ENCODE measurements at regions of chr6 and their contacts with region 1.

Region 1: DNA sequence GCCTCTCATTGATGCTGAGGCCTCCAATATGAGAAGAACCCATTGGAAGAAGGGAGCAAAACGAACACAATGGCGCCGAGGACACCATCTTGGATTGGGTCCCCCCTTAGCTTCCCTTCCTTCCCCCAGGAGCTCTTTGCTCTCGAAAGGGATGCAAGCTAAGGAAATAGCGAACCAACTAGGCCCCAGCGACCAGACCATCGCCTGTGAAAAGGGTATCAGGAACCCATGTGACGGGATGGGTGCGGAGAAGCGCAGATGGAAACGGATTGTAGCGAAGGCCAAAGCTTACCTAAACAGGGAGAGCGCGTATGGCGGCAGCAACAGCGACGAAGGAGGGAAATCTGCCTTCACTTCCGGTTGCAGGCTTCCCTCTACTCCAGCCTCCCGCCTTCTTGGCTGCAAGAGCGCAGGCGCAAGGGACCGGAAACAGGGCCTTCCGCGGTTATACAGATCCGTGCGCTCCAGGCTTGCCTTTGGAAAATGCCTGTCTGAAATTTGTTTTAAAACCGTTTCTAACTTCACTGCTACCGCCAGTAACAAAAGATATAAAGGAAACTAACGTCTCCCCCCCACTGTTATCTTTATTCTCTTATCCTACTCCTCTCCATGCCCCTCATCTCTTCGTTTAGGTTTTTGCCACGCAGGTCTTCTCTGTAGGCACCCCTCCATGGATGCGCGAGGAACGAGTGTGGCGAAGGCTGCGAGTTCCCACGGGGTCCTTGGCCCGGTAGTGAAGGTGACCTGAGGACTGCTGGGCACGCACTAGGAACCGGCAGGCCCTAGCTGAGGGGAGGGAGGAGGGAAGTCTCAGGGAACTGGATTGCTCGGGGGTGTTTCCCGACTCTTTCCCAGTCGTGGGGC is at the start of gene DDX39B:
- DNase-seq: peak; percentile 89 to 90
- H3K4me3 ChIP-seq: peak within 1 kb of the TSS; percentile 75 to 99 (median 97)
- H3K27ac ChIP-seq: peak within 1 kb of the TSS; percentile 99
- H3K4me1 ChIP-seq: peaks cover 4 to 18% (median 10%) of the 10 kb centered on the region in 4 experiments; a peak in 5 of 7 replicates
- H3K27me3 ChIP-seq: no peaks in the 10 kb centered on the region
- CTCF ChIP-seq: no peak
- EP300 ChIP-seq: peak in 1 of 2 experiments; percentile 20; a peak in 1 of 3 replicates
- POLR2A ChIP-seq: peak; percentile 97 to 99
- RAD21 ChIP-seq: no peak
- total RNA-seq, gene DDX39B: 780 and 794 TPM in 2 replicates

Region 2: GRCh38 chr6:31419842-31420241 is 122.0 kb before region 1 on chr6:
- CTCF ChIA-PET with region 1: no interaction called
- POLR2A ChIA-PET with region 1: no interaction called
- DNase-seq: peak in 1 of 2 experiments; percentile 24
- H3K4me3 ChIP-seq: no peak overlapping the region
- H3K27ac ChIP-seq: no peak overlapping the region
- H3K4me1 ChIP-seq: no peaks in the 10 kb centered on the region
- H3K27me3 ChIP-seq: no peaks in the 10 kb centered on the region
- CTCF ChIP-seq: no peak
- EP300 ChIP-seq: no peak
- POLR2A ChIP-seq: no peak
- RAD21 ChIP-seq: no peak

Region 3: DNA sequence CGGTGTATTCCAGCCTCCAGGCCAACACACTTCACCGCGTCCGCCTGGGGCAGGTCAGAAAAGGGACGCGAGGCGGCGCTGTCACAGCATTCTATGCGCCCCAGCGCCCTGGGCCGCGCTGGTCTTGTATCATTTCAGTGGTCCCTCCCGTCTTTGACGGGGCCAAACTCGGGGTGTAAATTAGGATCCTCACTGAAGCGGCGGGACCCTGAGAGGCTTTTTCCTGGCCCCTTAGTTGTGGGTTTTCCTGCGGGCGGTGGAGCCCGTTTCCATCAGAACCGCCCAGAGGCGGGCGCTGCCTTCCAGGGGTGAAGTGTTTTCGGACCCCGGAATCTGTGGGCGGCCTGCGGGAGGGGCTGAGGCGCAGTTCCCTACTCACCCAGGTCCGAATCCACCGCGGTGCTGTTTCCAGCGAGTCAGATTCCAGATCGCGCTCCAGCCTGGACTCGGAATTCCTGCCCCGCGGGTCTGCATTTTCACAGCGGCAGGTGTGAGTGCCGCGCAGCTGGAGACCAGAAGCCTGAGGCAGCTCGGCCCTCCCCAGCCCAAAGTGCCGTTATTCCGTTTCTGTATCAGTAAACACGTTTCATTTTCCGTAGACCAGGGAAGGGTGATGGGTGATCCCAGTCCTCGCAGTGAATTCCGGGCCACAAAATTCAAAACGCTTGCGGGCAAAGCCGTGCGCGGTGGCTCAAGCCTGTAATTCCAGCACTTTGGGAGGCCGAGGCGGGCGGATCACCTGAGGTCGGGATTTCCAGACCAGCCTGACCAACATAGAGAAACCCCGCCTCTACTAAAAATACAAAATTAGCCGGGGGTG is 47.8 kb before region 1 on chr6:
- CTCF ChIA-PET with region 1: interaction called, 3 read pairs
- POLR2A ChIA-PET with region 1: interaction called, 136 read pairs
- DNase-seq: peak in 1 of 2 experiments; percentile 92
- H3K4me3 ChIP-seq: peak overlapping the region; percentile 48 to 70 (median 64)
- H3K27ac ChIP-seq: no peak overlapping the region
- H3K4me1 ChIP-seq: peaks cover 0 to 12% (median 5%) of the 10 kb centered on the region in 4 experiments; a peak in 6 of 7 replicates
- H3K27me3 ChIP-seq: peaks cover 0 to 15% (median 9%) of the 10 kb centered on the region in 4 experiments; a peak in 6 of 7 replicates
- CTCF ChIP-seq: peak; percentile 81 to 89 (median 81)
- EP300 ChIP-seq: 0 out of 3 replicates have a peak, but pooled peaks of 1 of the 2 experiments have one; percentile 14
- POLR2A ChIP-seq: peak in 1 of 2 experiments; percentile 36; a peak in 1 of 3 replicates
- RAD21 ChIP-seq: peak; percentile 65 to 69

Region 4: GRCh38 chr6:31559958-31560696 is 18.2 kb after region 1 on chr6:
- CTCF ChIA-PET with region 1: interaction called, 5 read pairs
- POLR2A ChIA-PET with region 1: interaction called, 12 read pairs
- DNase-seq: no peak
- H3K4me3 ChIP-seq: no peak overlapping the region
- H3K27ac ChIP-seq: no peak overlapping the region
- H3K4me1 ChIP-seq: no peaks in the 10 kb centered on the region
- H3K27me3 ChIP-seq: no peaks in the 10 kb centered on the region
- CTCF ChIP-seq: no peak
- EP300 ChIP-seq: no peak
- POLR2A ChIP-seq: no peak
- RAD21 ChIP-seq: no peak

Region 5: DNA sequence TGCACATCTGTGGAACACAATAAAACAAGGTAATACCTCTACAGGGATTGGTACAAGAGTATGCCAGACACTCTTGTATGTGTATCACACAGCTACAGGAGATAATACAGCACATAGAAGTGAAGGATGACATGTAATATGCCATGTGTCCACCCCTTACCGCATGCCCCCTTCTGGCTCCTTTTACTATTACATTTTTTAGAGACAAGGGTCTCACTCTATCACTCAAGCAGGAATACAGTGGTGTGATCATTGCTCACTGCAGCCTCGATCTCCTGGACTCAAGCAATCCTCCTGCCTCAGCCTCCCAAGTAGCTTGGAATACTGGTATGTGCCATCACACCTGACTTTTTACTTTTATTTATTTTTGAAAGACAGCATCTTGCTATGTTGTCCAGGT is 55.1 kb after region 1 on chr6:
- CTCF ChIA-PET with region 1: interaction called, 613 read pairs
- POLR2A ChIA-PET with region 1: interaction called, 99 read pairs
- DNase-seq: no peak
- H3K4me3 ChIP-seq: no peak overlapping the region
- H3K27ac ChIP-seq: no peak overlapping the region
- H3K4me1 ChIP-seq: no peaks in the 10 kb centered on the region
- H3K27me3 ChIP-seq: no peaks in the 10 kb centered on the region
- CTCF ChIP-seq: peak in 2 of 3 experiments; percentile 48 to 52; a peak in 2 of 4 replicates
- EP300 ChIP-seq: no peak
- POLR2A ChIP-seq: no peak
- RAD21 ChIP-seq: peak; percentile 26 to 40; a peak in 3 of 4 replicates

Region 6: DNA sequence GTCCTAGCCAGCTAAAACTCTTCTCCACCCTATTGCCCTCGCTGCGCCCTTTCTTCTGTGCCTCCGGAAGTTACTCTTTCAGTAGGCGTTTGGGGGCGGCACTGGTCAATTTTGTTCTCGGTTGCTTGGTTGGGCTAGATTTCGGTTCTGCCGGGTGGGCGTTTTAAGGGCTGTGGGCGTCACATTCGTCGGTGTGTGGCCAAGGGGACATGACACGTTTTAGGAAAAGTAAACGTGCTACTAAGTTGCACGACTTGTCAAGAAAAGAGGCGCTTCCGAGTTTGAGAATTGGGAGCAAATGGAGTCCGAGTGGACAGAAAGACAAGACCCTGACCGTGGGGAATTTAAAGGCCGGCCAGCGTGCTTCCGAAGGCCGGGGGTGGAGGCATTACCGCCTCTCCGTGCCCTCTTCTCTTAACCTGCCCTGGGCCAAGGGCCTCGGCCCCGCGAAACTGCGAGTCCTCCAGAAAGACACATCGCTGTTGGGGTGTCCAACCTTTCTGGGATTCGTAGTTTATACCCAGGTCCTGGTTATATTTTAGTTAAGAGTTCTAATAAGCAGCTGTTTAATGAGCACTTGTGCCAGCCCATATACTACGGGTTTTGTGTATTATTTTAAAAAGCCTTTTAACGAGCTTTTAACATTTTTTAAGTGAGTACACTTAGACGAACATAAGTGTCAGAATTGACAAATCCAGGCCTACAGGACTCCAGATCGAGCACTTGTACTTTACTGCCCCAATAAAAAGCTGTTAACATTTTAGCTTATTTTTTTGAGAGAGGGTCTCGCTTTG is 111.2 kb after region 1 on chr6:
- CTCF ChIA-PET with region 1: interaction called, 6 read pairs
- POLR2A ChIA-PET with region 1: interaction called, 57 read pairs
- DNase-seq: peak in 1 of 2 experiments; percentile 76
- H3K4me3 ChIP-seq: peak overlapping the region; percentile 82 to 94 (median 92)
- H3K27ac ChIP-seq: peak overlapping the region; percentile 99
- H3K4me1 ChIP-seq: peaks cover 0 to 5% (median under 1%) of the 10 kb centered on the region in 4 experiments; a peak in 2 of 7 replicates
- H3K27me3 ChIP-seq: no peaks in the 10 kb centered on the region
- CTCF ChIP-seq: peak in 1 of 3 experiments; percentile 18; a peak in 1 of 4 replicates
- EP300 ChIP-seq: no peak
- POLR2A ChIP-seq: peak in 1 of 2 experiments; percentile 79; a peak in 2 of 3 replicates
- RAD21 ChIP-seq: peak in 1 of 2 experiments; percentile 21; a peak in 2 of 4 replicates